Activated naive CD4-positive, alpha-beta T cell treated with anti-CD3 and anti-CD28 coated beads, Interleukin-2, amount 10 ng/mL, durations not matched to agents 7 days and 5 days (primary cell): ENCODE measurements at regions of chr19 and their contacts with region 1.

Region 1: DNA sequence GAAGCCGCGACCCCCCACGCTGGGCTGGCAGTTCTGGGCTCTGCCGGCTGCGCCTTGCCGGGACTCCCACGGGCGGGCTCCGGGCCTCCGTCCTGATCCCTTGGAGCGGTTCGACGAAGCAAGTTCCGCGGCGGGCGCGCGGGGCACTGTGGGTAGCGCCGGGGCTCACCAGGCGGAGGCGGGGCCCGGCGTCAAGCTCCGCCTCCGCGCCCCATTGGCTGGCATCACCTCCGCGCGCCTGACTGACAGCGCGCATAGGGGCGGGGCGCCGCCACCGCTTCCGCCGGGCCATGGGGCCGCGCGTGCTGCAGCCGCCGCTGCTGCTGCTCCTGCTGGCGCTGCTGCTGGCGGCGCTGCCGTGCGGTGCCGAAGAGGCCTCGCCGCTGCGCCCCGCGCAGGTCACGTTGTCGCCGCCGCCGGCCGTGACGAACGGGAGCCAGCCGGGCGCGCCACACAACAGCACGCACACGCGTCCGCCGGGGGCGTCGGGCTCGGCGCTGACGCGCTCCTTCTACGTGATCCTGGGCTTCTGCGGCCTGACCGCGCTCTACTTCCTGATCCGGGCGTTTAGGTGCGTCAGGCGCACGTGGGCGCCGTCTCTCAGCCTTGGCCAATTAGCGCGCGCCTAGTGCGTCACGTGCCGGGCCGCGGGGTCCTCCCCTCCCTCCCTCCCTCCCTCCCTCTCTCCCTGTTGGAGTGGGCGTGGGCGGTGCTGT is at the start of gene FAM174C:
- DNase-seq: peak; percentile 97
- H3K4me3 Mint-ChIP-seq: peak within 1 kb of the TSS; percentile 89
- H3K27ac Mint-ChIP-seq: peak within 1 kb of the TSS; percentile 99
- H3K4me1 Mint-ChIP-seq: peaks cover 57% of the 10 kb centered on the region
- H3K27me3 Mint-ChIP-seq: no peaks in the 10 kb centered on the region

Region 2: GRCh38 chr19:1373534-1374249 is 98.3 kb after region 1 on chr19:
- CTCF ChIA-PET with region 1: interaction called, 17 read pairs
- DNase-seq: no peak
- H3K4me3 Mint-ChIP-seq: no peak overlapping the region
- H3K27ac Mint-ChIP-seq: no peak overlapping the region
- H3K4me1 Mint-ChIP-seq: no peaks in the 10 kb centered on the region
- H3K27me3 Mint-ChIP-seq: no peaks in the 10 kb centered on the region